ENCODE measurements at regions of chr4 and their contacts with region 1.

Region 1: GRCh38 chr4:110959041-110959643 is 336.3 kb upstream of the PITX2 start:
- DNase-seq: no peak
- ATAC-seq: no peak
- H3K4me3 ChIP-seq: no peak overlapping the region
- H3K27ac ChIP-seq: no peak overlapping the region
- H3K4me1 ChIP-seq: no peaks in the 10 kb centered on the region
- H3K27me3 ChIP-seq: peaks cover 56% of the 10 kb centered on the region
- CTCF ChIP-seq: peak; percentile 59; the same call in 1 of the 2 replicates

Region 2: GRCh38 chr4:110631584-110632505 is 327.3 kb before region 1 on chr4:
- CTCF ChIA-PET with region 1: no interaction called
- POLR2A ChIA-PET with region 1: no interaction called
- intact Hi-C with region 1: loop called (anchors 1 kb)
- DNase-seq: peak; percentile 80
- ATAC-seq: peak; percentile 99
- H3K4me3 ChIP-seq: peak overlapping the region; percentile 61
- H3K27ac ChIP-seq: no peak overlapping the region
- H3K4me1 ChIP-seq: peaks cover 6% of the 10 kb centered on the region; the same call in 1 of the 2 replicates
- H3K27me3 ChIP-seq: peaks cover 77% of the 10 kb centered on the region
- CTCF ChIP-seq: peak; percentile 85

Region 3: GRCh38 chr4:110915301-110915700 is 43.8 kb before region 1 on chr4:
- CTCF ChIA-PET with region 1: no interaction called
- POLR2A ChIA-PET with region 1: no interaction called
- intact Hi-C with region 1: no loop called
- DNase-seq: no peak
- ATAC-seq: no peak
- H3K4me3 ChIP-seq: no peak overlapping the region
- H3K27ac ChIP-seq: no peak overlapping the region
- H3K4me1 ChIP-seq: no peaks in the 10 kb centered on the region
- H3K27me3 ChIP-seq: peaks cover 11% of the 10 kb centered on the region; the same call in 1 of the 2 replicates
- CTCF ChIP-seq: no peak

Region 4: DNA sequence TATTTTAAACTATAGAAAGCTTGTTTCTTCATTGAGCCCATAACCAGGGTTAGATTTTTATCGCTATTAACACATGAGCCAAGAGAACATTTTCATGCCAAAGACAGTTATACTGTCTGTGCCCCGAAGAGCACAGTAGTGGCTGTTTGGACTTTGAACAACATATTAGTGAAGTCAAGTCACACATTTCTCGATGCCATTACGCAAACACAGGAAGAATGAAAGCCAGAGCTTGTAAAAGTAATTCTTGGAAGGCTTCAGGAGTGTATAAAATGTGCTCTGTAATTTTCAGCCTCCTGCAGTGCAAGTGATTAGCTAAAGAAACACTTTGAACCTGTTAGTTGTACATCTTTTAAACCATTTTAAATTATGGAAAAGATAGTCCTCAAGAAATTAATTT is 254.4 kb after region 1 on chr4:
- CTCF ChIA-PET with region 1: no interaction called
- POLR2A ChIA-PET with region 1: no interaction called
- intact Hi-C with region 1: no loop called
- DNase-seq: no peak
- ATAC-seq: no peak
- H3K4me3 ChIP-seq: no peak overlapping the region
- H3K27ac ChIP-seq: no peak overlapping the region
- H3K4me1 ChIP-seq: no peaks in the 10 kb centered on the region
- H3K27me3 ChIP-seq: peaks cover 22% of the 10 kb centered on the region
- CTCF ChIP-seq: no peak